Aorta (tissue), 5 donors: ENCODE measurements at regions of chr14 and their contacts with region 1.

Region 1: DNA sequence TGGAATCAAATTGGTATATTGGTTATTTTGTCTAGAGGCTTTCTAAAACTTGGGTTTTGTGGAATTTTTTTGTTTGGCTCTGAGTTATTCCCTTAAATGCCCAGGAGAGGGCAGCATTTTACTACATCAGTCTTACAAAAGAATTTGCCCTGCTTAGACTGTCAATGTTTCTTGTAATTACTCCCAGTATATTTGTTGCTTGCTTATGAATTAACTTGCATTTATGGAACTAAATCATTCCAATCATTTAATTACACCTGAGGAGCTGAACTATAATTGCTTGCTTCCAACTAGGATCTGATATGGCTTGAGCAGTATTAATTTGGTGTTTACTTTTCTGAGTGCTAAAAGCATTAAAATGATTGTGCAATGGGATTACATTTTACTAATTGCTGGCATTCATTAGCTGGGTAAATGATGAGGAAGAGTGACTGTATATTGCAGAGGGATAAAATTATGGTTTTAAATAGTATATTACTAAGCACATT is 48.7 kb downstream of the MIPOL1 start:
- DNase-seq: no peak
- ATAC-seq: no peak
- H3K4me3 ChIP-seq: no peak overlapping the region
- H3K27ac ChIP-seq: no peak overlapping the region
- H3K4me1 ChIP-seq: no peaks in the 10 kb centered on the region
- H3K27me3 ChIP-seq: no peaks in the 10 kb centered on the region

Region 2: GRCh38 chr14:37594238-37594914 is 347.9 kb after region 1 on chr14:
- intact Hi-C with region 1: loop called in 1 of 2 experiments (anchors 10 kb)
- DNase-seq: peak in 1 of 2 donors; percentile 72
- ATAC-seq: no peak
- H3K4me3 ChIP-seq: peak overlapping the region in 1 of 2 donors; percentile 3
- H3K27ac ChIP-seq: no peak overlapping the region
- H3K4me1 ChIP-seq: no peaks in the 10 kb centered on the region
- H3K27me3 ChIP-seq: peaks cover 0 to 3% of the 10 kb centered on the region in 2 donors

Region 3: GRCh38 chr14:37599507-37600368 is 353.3 kb after region 1 on chr14:
- intact Hi-C with region 1: loop called (anchors 10 kb)
- DNase-seq: no peak
- ATAC-seq: no peak
- H3K4me3 ChIP-seq: no peak overlapping the region
- H3K27ac ChIP-seq: no peak overlapping the region
- H3K4me1 ChIP-seq: no peaks in the 10 kb centered on the region
- H3K27me3 ChIP-seq: peaks cover 0 to 8% of the 10 kb centered on the region in 2 donors

Region 4: GRCh38 chr14:37874429-37875191 is 628.1 kb after region 1 on chr14:
- intact Hi-C with region 1: loop called (anchors 5 to 10 kb)
- DNase-seq: peak; percentile 84 to 93
- ATAC-seq: peak; percentile 91
- H3K4me3 ChIP-seq: no peak overlapping the region
- H3K27ac ChIP-seq: no peak overlapping the region
- H3K4me1 ChIP-seq: no peaks in the 10 kb centered on the region
- H3K27me3 ChIP-seq: no peaks in the 10 kb centered on the region